A549 (cell line): ENCODE measurements at regions of chr16 and their contacts with region 1.

Region 1: DNA sequence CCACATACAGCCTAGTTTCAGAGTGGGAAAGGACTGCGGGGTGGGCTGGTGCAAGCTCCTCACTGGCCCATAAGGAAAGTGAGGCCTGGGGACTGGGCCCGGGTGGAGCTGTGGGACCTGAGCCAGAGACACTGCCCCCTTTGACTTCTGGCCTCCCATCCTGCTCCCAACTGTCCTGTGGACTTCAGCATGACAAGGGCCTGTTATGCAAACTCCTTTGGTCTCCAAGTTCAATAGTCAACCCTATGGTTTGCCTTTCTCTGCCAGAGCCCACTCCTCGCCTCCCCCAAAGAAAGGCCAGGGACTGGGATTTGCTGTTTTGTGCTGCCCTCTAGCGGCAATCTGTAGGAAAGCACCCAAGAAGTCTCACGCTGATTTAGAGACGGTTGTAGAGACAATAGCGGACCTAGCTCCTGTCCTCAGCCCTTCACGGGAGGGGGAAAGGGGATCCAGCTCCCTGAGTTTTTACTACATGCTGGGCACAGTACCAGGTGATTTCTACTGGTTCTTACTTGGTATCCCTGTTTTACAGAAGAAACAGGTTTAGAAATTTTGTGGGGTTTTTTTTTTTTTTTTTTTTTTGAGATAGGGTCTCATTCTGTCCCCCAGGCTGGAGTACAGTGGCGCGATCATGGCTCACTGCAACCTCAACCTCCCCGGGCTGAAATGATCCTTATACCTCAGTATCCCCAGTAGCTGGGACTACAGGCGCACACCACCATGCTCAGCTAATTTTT is 1.2 kb upstream of the TLCD3B start:
- DNase-seq: peak in 1 of 2 experiments; percentile 79
- ATAC-seq: peak in 1 of 2 experiments; percentile 75; a peak in 3 of 6 replicates
- H3K4me3 ChIP-seq: no peak overlapping the region
- H3K27ac ChIP-seq: no peak overlapping the region
- H3K4me1 ChIP-seq: 0 out of 3 replicates have a peak, but pooled peaks cover 7% of the 10 kb centered on the region
- CTCF ChIP-seq: peak; percentile 91
- EP300 ChIP-seq: no peak
- POLR2A ChIP-seq: no peak
- RAD21 ChIP-seq: peak; percentile 91 to 94

Region 2: DNA sequence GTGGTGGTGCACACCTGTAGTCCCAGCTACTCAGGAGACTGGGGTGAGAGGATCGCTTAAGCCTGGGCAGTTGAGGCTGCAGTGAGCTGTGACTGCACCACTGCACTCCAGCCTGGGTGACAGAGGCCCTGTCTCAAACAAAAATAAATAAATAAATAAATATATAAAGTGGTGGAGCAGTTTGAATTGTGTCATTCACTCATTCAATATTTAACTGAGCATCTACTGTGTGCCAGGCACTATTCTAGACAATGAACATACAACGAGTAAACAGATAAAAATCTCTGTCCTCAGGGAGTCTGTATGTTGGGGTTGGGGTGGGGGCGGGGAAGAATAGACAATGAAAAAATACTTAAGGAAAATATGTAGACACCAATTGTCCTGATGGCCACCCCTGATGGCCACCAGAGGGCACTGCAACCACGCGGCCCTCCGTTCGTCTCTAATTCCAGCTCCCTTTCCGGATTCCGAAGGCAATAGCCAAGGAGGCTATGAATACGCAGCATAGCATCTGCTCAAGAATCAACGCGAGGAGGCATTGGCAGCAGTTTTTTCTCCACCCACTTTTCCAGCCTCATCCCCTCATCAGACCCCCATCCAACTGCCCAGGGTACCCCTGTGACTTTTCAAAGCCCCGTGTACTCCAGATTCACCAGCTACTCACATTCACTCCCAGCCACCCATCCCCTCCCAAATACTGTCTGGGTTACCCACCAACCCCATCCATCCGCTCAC is 331.8 kb before region 1 on chr16:
- CTCF ChIA-PET with region 1: interaction called, 48 read pairs
- POLR2A ChIA-PET with region 1: no interaction called
- DNase-seq: peak; percentile 92 to 96
- ATAC-seq: peak; percentile 93 to 94
- H3K4me3 ChIP-seq: no peak overlapping the region
- H3K27ac ChIP-seq: peak overlapping the region; percentile 34 to 55; a peak in 5 of 6 replicates
- H3K4me1 ChIP-seq: peaks cover 4% of the 10 kb centered on the region; the same call in 1 of the 3 replicates
- CTCF ChIP-seq: peak; percentile 96
- EP300 ChIP-seq: no peak
- POLR2A ChIP-seq: no peak
- RAD21 ChIP-seq: peak; percentile 94 to 95

Region 3: GRCh38 chr16:29805378-29806098 is 226.7 kb before region 1 on chr16:
- CTCF ChIA-PET with region 1: interaction called, 11 read pairs
- POLR2A ChIA-PET with region 1: no interaction called
- DNase-seq: peak; percentile 84 to 98
- ATAC-seq: peak; percentile 44 to 80
- H3K4me3 ChIP-seq: peak overlapping the region; percentile 55
- H3K27ac ChIP-seq: peak overlapping the region; percentile 98 to 99
- H3K4me1 ChIP-seq: peaks cover 38% of the 10 kb centered on the region
- CTCF ChIP-seq: no peak
- EP300 ChIP-seq: peak in 1 of 2 experiments; percentile 49; a peak in 1 of 5 replicates
- POLR2A ChIP-seq: peak; percentile 57
- RAD21 ChIP-seq: peak in 1 of 2 experiments; percentile 3; a peak in 1 of 5 replicates

Region 4: DNA sequence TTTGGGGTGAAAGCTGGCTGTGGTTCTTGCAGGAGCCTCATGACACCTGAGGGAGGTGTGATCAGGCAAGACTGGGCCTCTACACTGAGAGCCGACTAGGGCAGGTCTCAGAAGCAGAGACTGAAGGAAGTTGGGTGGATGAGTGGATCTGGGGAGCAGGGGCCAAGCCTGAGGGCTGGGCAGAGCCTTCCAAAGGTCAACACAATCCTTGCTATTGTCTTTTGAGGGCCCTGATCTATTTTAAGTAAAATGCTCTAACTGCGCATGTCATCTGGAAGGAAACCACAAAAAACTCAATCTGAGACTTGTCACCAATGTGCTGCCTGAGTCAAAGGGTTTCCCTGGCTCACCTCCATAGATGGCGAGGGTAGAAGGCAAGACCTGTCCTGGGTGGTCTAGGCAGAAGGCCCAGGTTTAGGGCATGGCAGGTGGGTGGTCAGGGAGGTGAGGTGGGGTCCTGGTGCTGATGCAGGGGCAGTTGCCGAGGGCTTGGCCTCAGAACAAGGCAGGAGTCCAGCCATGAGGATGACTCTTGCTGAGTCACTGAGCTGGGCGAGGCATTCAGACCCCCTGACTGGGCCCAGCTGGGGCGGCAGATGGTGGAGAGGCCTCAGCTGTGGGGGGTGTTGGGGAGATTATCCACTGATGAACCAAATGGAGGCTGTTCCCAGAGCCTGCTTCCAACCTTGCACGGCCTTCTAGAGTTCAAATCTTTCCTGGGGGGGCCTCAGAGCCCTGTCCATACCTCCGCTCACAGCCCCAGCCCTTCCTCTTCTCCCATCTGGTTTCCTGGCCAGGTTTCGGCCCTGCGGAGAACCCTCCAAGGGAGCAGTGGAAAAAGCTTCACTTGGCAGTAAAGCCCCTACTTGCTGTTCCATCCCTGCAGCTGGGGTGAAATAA is 206.9 kb before region 1 on chr16:
- CTCF ChIA-PET with region 1: interaction called, 33 read pairs
- POLR2A ChIA-PET with region 1: no interaction called
- DNase-seq: peak; percentile 78
- ATAC-seq: peak; percentile 15 to 56; a peak in 3 of 6 replicates
- H3K4me3 ChIP-seq: peak overlapping the region; percentile 17
- H3K27ac ChIP-seq: peak overlapping the region; percentile 92 to 93
- H3K4me1 ChIP-seq: peaks cover 90% of the 10 kb centered on the region
- CTCF ChIP-seq: no peak
- EP300 ChIP-seq: no peak
- POLR2A ChIP-seq: no peak
- RAD21 ChIP-seq: no peak; a peak in 1 of 5 replicates

Region 5: DNA sequence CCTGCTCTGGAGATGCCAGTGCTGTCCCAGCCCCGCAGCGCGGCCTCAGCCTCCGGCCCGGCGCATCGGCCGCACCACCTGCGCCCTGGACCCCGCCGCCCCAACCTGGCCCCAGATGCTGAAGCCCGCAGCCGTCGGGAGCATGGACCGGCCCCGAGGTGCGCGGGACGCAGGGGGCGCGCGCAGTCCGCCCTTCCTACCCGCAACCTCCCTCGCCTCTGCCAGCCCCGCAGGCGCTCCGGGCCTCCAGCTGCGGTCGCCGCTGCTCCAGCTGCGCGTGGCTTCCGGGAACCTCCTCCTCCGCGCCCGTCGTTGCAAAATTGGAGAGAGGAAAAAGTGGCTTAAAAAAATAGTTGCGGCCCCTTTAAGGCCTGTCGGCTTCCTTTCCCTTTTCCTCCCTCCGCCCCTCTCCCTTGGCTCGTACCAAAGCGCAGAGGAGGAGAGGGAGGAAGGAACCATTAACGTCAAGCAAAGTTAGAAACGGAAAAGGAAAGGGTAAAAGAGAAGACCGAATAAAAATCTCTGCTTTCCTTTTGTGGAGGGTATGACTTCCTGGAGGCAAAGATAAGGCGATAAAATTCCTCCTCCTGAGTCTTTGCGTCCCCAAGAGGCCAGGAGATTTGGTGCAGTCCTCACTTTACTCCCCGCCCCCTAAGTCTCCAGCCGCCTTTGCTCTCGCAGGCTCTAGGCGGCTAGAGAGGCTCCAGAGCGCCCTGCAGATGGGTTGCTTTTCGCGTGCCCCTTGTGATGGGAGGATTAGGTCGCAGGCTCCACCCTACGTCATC is 169.2 kb before region 1 on chr16 and contains the start of gene CDIPT:
- CTCF ChIA-PET with region 1: interaction called, 10 read pairs
- POLR2A ChIA-PET with region 1: no interaction called
- DNase-seq: peak; percentile 84 to 99
- ATAC-seq: peak; percentile 96 to 98
- H3K4me3 ChIP-seq: peak within 1 kb of the TSS; percentile 76
- H3K27ac ChIP-seq: peak within 1 kb of the TSS; percentile 88 to 97
- H3K4me1 ChIP-seq: peaks cover 15% of the 10 kb centered on the region
- CTCF ChIP-seq: peak; percentile 61
- EP300 ChIP-seq: no peak
- POLR2A ChIP-seq: peak; percentile 55
- RAD21 ChIP-seq: peak; percentile 13 to 37; a peak in 4 of 5 replicates
- polyA plus RNA-seq, gene CDIPT: 64.0 and 84.3 TPM in 2 replicates

Region 6: DNA sequence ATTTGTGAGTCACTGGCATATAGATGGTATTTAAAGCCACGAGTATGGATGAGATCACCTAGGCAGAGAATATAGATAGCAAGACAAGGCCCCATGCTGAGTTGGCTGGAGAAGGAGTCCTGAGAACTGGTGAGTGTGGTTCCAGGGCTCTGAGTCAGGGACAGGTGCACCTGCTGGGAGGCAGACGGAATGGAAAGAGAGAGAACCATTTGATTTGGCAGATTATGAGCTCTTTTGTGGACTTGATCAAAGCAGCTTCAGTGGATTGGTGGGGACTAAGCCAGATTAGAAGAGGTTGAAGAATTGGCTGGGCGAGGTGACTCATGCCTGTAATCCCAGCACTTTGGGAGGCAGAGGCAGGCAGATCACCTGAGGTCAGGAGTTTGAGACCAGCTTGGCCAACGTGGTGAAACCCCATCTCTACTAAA is 13.5 kb before region 1 on chr16:
- CTCF ChIA-PET with region 1: interaction called, 26 read pairs
- POLR2A ChIA-PET with region 1: no interaction called
- DNase-seq: no peak
- ATAC-seq: no peak
- H3K4me3 ChIP-seq: no peak overlapping the region
- H3K27ac ChIP-seq: no peak overlapping the region
- H3K4me1 ChIP-seq: no peaks in the 10 kb centered on the region
- CTCF ChIP-seq: no peak
- EP300 ChIP-seq: no peak
- POLR2A ChIP-seq: no peak
- RAD21 ChIP-seq: no peak

Region 7: GRCh38 chr16:30065143-30065850 is 33.0 kb after region 1 on chr16 and contains the start of gene ALDOA:
- CTCF ChIA-PET with region 1: interaction called, 36 read pairs
- POLR2A ChIA-PET with region 1: interaction called, 12 read pairs
- DNase-seq: peak; percentile 86 to 98
- ATAC-seq: peak; percentile 78 to 89
- H3K4me3 ChIP-seq: peak within 1 kb of the TSS; percentile 73
- H3K27ac ChIP-seq: peak within 1 kb of the TSS; percentile 96 to 97
- H3K4me1 ChIP-seq: peaks cover 34% of the 10 kb centered on the region
- CTCF ChIP-seq: no peak
- EP300 ChIP-seq: 0 out of 5 replicates have a peak, but pooled peaks of 1 of the 2 experiments have one; percentile 13
- POLR2A ChIP-seq: peak; percentile 95
- RAD21 ChIP-seq: no peak
- polyA plus RNA-seq, gene ALDOA: 741 and 761 TPM in 2 replicates

Region 8: DNA sequence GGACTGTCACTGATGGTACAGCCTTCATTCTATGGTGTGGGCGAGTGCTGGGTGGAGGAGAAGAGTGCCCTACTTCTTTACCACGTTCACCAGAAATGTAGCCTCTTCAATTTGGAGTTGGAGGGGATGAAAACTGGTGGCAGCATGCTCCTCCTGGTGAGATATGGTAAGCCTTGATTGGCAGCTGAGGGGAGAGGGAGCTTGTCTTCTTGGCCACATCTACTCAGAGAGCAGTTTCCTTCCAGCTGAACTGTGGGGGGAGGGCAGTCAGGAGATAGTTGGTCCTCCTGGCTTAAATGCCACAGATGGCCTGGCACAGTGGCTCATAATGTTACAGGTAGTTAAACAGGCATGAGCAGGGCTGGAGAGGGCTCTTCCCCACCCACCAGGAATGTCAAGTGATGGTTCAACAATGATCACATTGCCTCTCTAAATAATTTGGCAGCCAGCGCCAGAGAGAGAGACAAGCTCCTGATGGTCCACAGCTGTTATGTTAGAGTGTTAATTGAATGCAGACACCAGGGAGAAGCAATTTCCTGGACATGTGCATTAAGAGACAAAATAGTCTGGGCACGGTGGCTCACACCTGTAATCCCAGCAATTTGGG is 99.7 kb after region 1 on chr16:
- CTCF ChIA-PET with region 1: no interaction called
- POLR2A ChIA-PET with region 1: no interaction called
- DNase-seq: no peak
- ATAC-seq: no peak
- H3K4me3 ChIP-seq: no peak overlapping the region
- H3K27ac ChIP-seq: no peak overlapping the region
- H3K4me1 ChIP-seq: no peaks in the 10 kb centered on the region
- CTCF ChIP-seq: no peak
- EP300 ChIP-seq: no peak
- POLR2A ChIP-seq: no peak
- RAD21 ChIP-seq: no peak

Region 9: GRCh38 chr16:30409125-30410060 is 377.1 kb after region 1 on chr16:
- CTCF ChIA-PET with region 1: no interaction called
- POLR2A ChIA-PET with region 1: no interaction called
- DNase-seq: peak; percentile 88 to 89
- ATAC-seq: peak; percentile 75 to 80
- H3K4me3 ChIP-seq: no peak overlapping the region
- H3K27ac ChIP-seq: peak overlapping the region; percentile 8 to 66; a peak in 2 of 6 replicates
- H3K4me1 ChIP-seq: peaks cover 30% of the 10 kb centered on the region
- CTCF ChIP-seq: peak; percentile 92
- EP300 ChIP-seq: no peak
- POLR2A ChIP-seq: no peak
- RAD21 ChIP-seq: peak; percentile 90 to 92